Activated CD4-positive, alpha-beta T cell treated with anti-CD3 and anti-CD28 coated beads for 36 hours (primary cell): ENCODE measurements at regions of chr14 and their contacts with region 1.

Region 1: GRCh38 chr14:54566410-54567223 is at the start of gene SAMD4A:
- DNase-seq: peak; percentile 75
- ATAC-seq: peak; percentile 20
- H3K4me3 Mint-ChIP-seq: peak within 1 kb of the TSS; percentile 85
- H3K27ac Mint-ChIP-seq: peak within 1 kb of the TSS; percentile 89
- H3K4me1 Mint-ChIP-seq: peaks cover 25% of the 10 kb centered on the region
- H3K27me3 Mint-ChIP-seq: peaks cover 15% of the 10 kb centered on the region
- total RNA-seq, gene SAMD4A: 2.7 to 2.8 TPM

Region 2: GRCh38 chr14:54488646-54489317 is 77.8 kb before region 1 on chr14 and contains the start of gene GMFB:
- CTCF ChIA-PET with region 1: interaction called, 3 read pairs
- POLR2A ChIA-PET with region 1: no interaction called
- intact Hi-C with region 1: loop called in 1 of 2 experiments (anchors 1 kb)
- DNase-seq: peak; percentile 94
- ATAC-seq: peak; percentile 96
- H3K4me3 Mint-ChIP-seq: peak within 1 kb of the TSS; percentile 91
- H3K27ac Mint-ChIP-seq: peak within 1 kb of the TSS; percentile 96
- H3K4me1 Mint-ChIP-seq: peaks cover 56% of the 10 kb centered on the region
- H3K27me3 Mint-ChIP-seq: no peaks in the 10 kb centered on the region
- total RNA-seq, gene GMFB: 28.9 to 37.3 TPM

Region 3: GRCh38 chr14:54627540-54628363 is 61.1 kb after region 1 on chr14:
- CTCF ChIA-PET with region 1: interaction called, 12 read pairs
- POLR2A ChIA-PET with region 1: no interaction called
- intact Hi-C with region 1: loop called (anchors 2 to 5 kb)
- DNase-seq: peak; percentile 50
- ATAC-seq: peak; percentile 74
- H3K4me3 Mint-ChIP-seq: peak overlapping the region; percentile 59
- H3K27ac Mint-ChIP-seq: peak overlapping the region; percentile 96
- H3K4me1 Mint-ChIP-seq: peaks cover 44% of the 10 kb centered on the region
- H3K27me3 Mint-ChIP-seq: no peaks in the 10 kb centered on the region

Region 4: DNA sequence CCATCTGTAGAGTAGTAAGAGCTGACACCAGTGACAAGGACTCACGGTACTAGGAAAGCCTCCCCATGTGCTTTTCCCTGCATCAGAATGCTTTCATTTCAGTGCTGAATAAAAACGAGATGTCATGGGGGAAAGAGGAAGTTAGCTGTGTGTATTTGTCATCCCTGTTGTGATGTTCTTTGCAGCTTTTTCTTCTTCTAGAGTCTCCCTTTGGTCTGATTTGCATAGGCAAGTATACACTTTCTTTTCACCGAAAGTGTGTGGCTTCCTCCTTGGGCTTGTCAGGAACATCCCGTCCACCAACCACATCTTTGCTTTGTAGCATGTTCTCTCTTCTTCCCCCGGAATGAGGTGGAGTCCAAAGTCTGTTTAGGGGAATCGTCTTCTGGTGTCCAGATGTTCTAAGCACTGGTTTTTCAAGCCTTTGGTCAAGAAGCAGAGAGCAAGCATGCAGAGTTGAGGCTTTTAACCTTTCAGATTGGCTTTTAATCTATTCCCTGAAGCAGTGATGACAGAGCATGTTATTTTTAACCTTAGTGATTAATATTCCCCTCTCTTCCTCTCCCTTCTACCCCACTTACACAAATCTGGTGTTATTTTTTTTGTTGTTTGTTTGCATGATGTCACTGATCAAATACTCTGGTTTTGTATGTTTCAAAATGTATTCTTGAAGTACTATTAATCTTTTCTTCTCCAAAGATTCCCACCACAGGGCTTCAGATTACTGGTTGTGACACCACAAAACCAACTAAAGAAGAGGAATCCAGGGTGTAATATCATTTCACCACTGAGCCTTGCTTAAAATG is 163.7 kb after region 1 on chr14:
- CTCF ChIA-PET with region 1: interaction called, 12 read pairs
- POLR2A ChIA-PET with region 1: interaction called, 5 read pairs
- intact Hi-C with region 1: loop called (anchors 1 kb)
- DNase-seq: peak; percentile 61
- ATAC-seq: peak; percentile 93
- H3K4me3 Mint-ChIP-seq: peak overlapping the region; percentile 58
- H3K27ac Mint-ChIP-seq: peak overlapping the region; percentile 94
- H3K4me1 Mint-ChIP-seq: peaks cover 40% of the 10 kb centered on the region
- H3K27me3 Mint-ChIP-seq: peaks cover 18% of the 10 kb centered on the region

Region 5: DNA sequence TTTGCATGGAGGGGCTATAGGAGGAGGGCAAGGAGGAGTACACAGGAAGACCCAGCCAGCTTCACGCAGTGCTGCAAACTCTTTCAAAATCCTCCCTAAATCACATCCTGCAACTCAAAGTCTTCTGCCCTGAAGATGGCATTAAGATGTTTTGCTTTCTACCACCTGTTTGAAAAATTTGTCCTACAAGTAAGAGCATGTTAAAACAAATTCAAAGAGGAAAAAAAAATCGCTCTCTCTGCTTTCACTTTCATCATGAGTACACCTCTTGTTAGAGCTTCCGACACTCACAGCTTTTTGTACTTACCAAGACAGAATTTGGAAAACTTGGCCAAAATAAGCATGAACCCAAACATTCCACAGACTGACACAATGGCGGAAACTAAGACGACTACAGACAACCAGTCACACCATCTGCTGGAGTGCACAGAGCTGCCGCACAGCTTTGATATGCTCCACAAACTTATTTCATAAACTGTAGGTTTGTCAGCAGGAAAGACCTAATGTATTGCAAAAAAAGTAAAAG is 314.7 kb after region 1 on chr14:
- CTCF ChIA-PET with region 1: interaction called, 4 read pairs
- POLR2A ChIA-PET with region 1: no interaction called
- intact Hi-C with region 1: loop called in 1 of 2 experiments (anchors 2 kb)
- DNase-seq: peak; percentile 34
- ATAC-seq: peak; percentile 71
- H3K4me3 Mint-ChIP-seq: peak overlapping the region; percentile 83
- H3K27ac Mint-ChIP-seq: peak overlapping the region; percentile 100
- H3K4me1 Mint-ChIP-seq: peaks cover 39% of the 10 kb centered on the region
- H3K27me3 Mint-ChIP-seq: no peaks in the 10 kb centered on the region